ENCODE measurements at regions of chr4 and their contacts with region 1.

Region 1: GRCh38 chr4:67746797-67747495 is 7.2 kb downstream of the GNRHR start:
- DNase-seq: peak in 4 of 5 donors; percentile 24 to 40 (median 28)
- H3K4me3 ChIP-seq: no peak overlapping the region
- H3K4me3 Mint-ChIP-seq: no peak overlapping the region
- H3K27ac ChIP-seq: no peak overlapping the region
- H3K27ac Mint-ChIP-seq: peak overlapping the region in 1 of 7 donors; percentile 8
- H3K4me1 ChIP-seq: no peaks in the 10 kb centered on the region
- H3K4me1 Mint-ChIP-seq: peaks cover 0 to 2% (median 0%) of the 10 kb centered on the region in 4 donors
- H3K27me3 ChIP-seq: no peaks in the 10 kb centered on the region
- H3K27me3 Mint-ChIP-seq: no peaks in the 10 kb centered on the region

Region 2: GRCh38 chr4:67700738-67701516 is 46.0 kb before region 1 on chr4 and contains the start of gene UBA6:
- CTCF ChIA-PET with region 1: interaction called, 8 read pairs
- POLR2A ChIA-PET with region 1: interaction called, 3 read pairs
- intact Hi-C with region 1: loop called (anchors 5 kb)
- DNase-seq: peak; percentile 91 to 95 (median 92)
- H3K4me3 ChIP-seq: peak within 1 kb of the TSS; percentile 85 to 93
- H3K4me3 Mint-ChIP-seq: peak within 1 kb of the TSS; percentile 94 to 99 (median 98)
- H3K27ac ChIP-seq: peak within 1 kb of the TSS; percentile 94
- H3K27ac Mint-ChIP-seq: peak within 1 kb of the TSS; percentile 86 to 99 (median 98)
- H3K4me1 ChIP-seq: peaks cover 56% of the 10 kb centered on the region
- H3K4me1 Mint-ChIP-seq: peaks cover 45 to 71% (median 60%) of the 10 kb centered on the region in 4 donors
- H3K27me3 ChIP-seq: no peaks in the 10 kb centered on the region
- H3K27me3 Mint-ChIP-seq: no peaks in the 10 kb centered on the region
- total RNA-seq, gene UBA6: 55.1 to 55.8 TPM

Region 3: DNA sequence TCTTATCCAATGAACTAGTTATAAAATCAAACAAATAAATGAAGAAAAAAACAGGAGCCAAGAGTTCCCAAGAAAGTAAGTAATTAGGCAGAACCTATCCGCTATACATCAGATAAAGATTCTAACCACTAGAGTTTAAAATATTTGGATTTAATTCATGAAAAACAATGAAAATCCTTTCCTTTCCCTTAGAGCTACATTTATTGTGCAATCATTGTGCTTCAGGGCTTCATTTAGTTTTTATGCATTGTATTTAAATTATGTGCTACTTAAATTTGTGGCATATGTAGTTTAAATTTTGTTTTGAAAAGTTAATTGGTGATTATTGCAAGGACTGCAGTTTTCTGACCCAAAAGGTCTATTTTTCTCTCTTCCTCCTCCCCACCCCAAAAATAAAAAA is 10.7 kb before region 1 on chr4:
- CTCF ChIA-PET with region 1: interaction called, 12 read pairs
- POLR2A ChIA-PET with region 1: no interaction called
- intact Hi-C with region 1: no loop called
- DNase-seq: no peak
- H3K4me3 ChIP-seq: no peak overlapping the region
- H3K4me3 Mint-ChIP-seq: no peak overlapping the region
- H3K27ac ChIP-seq: no peak overlapping the region
- H3K27ac Mint-ChIP-seq: no peak overlapping the region
- H3K4me1 ChIP-seq: no peaks in the 10 kb centered on the region
- H3K4me1 Mint-ChIP-seq: no peaks in the 10 kb centered on the region
- H3K27me3 ChIP-seq: no peaks in the 10 kb centered on the region
- H3K27me3 Mint-ChIP-seq: no peaks in the 10 kb centered on the region

Measured in CD4-positive, alpha-beta memory T cell (primary cell).